Mammary epithelial cell (primary cell): ENCODE measurements at regions of chr3 and their contacts with region 1.

Region 1: GRCh38 chr3:113838631-113839209 is at the start of gene GRAMD1C:
- DNase-seq: peak; percentile 71
- H3K4me3 ChIP-seq: peak within 1 kb of the TSS; percentile 35 to 64 (median 53)
- H3K27ac ChIP-seq: peak within 1 kb of the TSS; percentile 56
- H3K4me1 ChIP-seq: peaks cover 4% of the 10 kb centered on the region
- H3K27me3 ChIP-seq: no peaks in the 10 kb centered on the region
- CTCF ChIP-seq: peak; percentile 75 to 88
- total RNA-seq, gene GRAMD1C: 1.8 to 2.5 TPM

Region 2: DNA sequence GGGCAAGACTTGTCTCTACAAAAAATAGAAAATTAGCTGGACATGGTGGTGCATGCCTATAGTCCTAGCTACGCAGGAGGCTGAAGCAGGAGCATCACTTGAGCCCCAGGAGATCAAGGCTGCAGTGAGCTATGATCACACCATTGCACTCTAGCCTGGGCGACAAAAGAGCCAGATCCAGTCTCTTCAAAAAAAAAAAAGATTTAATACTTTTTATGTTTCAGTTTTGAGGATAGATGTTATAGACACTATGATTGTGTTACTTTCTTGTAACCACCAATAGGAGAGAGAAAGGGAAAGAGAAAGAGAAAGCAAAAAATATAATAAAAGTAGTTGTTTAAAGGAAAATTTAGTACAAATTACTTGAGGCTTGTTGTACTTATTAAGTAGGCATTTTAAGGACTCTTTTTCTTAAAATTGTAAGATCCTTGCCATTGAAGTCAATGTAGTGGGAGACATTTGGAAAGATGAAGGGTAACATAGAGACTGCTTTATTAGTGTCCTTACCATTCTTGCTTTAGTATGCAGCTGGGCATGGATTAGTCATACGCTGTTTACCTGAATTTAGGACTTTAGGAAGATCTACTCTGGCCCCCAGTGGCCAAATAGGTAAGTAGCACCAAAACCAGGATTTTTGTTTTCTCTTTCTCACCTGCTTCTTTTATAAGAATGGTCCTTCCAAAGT is 74.0 kb after region 1 on chr3:
- CTCF ChIA-PET with region 1: interaction called, 5 read pairs
- dilution Hi-C with region 1: no loop called
- in situ Hi-C with region 1: loop called in 1 of 2 experiments (anchors 5 kb)
- intact Hi-C with region 1: loop called (anchors 1 kb)
- DNase-seq: peak; percentile 78
- H3K4me3 ChIP-seq: no peak overlapping the region
- H3K27ac ChIP-seq: no peak overlapping the region
- H3K4me1 ChIP-seq: no peaks in the 10 kb centered on the region
- H3K27me3 ChIP-seq: no peaks in the 10 kb centered on the region
- CTCF ChIP-seq: peak; percentile 85 to 87

Region 3: GRCh38 chr3:113985541-113985940 is 146.8 kb after region 1 on chr3:
- CTCF ChIA-PET with region 1: no interaction called
- dilution Hi-C with region 1: no loop called
- in situ Hi-C with region 1: no loop called
- intact Hi-C with region 1: no loop called
- DNase-seq: no peak
- H3K4me3 ChIP-seq: no peak overlapping the region
- H3K27ac ChIP-seq: no peak overlapping the region
- H3K4me1 ChIP-seq: no peaks in the 10 kb centered on the region
- H3K27me3 ChIP-seq: no peaks in the 10 kb centered on the region
- CTCF ChIP-seq: no peak

Region 4: GRCh38 chr3:114056130-114057010 is 217.7 kb after region 1 on chr3 and contains the starts of genes CCDC191 and QTRT2:
- CTCF ChIA-PET with region 1: interaction called, 9 read pairs
- dilution Hi-C with region 1: no loop called
- in situ Hi-C with region 1: no loop called
- intact Hi-C with region 1: loop called (anchors 2 kb)
- DNase-seq: peak; percentile 99
- H3K4me3 ChIP-seq: peak within 1 kb of the TSS; percentile 70 to 86 (median 75)
- H3K27ac ChIP-seq: peak within 1 kb of the TSS; percentile 97
- H3K4me1 ChIP-seq: peaks cover 5% of the 10 kb centered on the region
- H3K27me3 ChIP-seq: no peaks in the 10 kb centered on the region
- CTCF ChIP-seq: no peak
- total RNA-seq, gene CCDC191: 4.0 to 4.2 TPM
- total RNA-seq, gene QTRT2: 20.8 to 35.3 TPM

Region 5: DNA sequence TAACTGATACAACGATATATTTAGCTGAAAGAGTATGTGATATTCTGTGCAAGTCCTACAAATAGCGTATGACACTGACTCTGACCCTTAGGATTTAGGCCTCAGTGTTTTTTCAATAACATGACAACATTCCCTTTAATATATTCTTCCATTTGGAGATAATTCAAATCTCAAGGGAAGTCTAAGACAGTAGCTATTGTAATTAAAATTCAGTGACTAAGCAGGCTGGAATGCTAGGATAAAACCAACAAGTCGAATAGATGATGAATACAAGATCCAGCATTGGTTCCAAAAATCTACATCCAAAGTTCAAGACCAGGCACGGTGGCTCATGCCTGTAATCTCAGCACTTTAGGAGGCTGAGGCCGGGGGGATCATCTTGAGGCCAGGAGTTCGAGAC is 274.0 kb after region 1 on chr3:
- CTCF ChIA-PET with region 1: no interaction called
- dilution Hi-C with region 1: no loop called
- in situ Hi-C with region 1: no loop called
- intact Hi-C with region 1: no loop called
- DNase-seq: no peak
- H3K4me3 ChIP-seq: no peak overlapping the region
- H3K27ac ChIP-seq: no peak overlapping the region
- H3K4me1 ChIP-seq: no peaks in the 10 kb centered on the region
- H3K27me3 ChIP-seq: peaks cover 8% of the 10 kb centered on the region
- CTCF ChIP-seq: no peak